Activated T-helper 1 cell treated with anti-CD3 and anti-CD28 coated beads, Interleukin-12 subunit alpha, Interleukin-12 subunit beta, Interleukin-2, Interleukin-4 antibody, amounts not matched to agents 30 ng/mL and 10 ng/mL and 1 ng/mL, durations not matched to agents 14 hours and 24 hours and 36 hours (primary cell): ENCODE measurements at regions of chr15 and their contacts with region 1.

Region 1: GRCh38 chr15:55829826-55830225 is 86.9 kb upstream of the PRTG start:
- DNase-seq: no peak
- H3K4me3 Mint-ChIP-seq: peak overlapping the region; percentile 28
- H3K27ac Mint-ChIP-seq: peak overlapping the region; percentile 4
- H3K4me1 Mint-ChIP-seq: peaks cover 30% of the 10 kb centered on the region
- H3K27me3 Mint-ChIP-seq: no peaks in the 10 kb centered on the region

Region 2: GRCh38 chr15:55649054-55649423 is 180.8 kb before region 1 on chr15:
- intact Hi-C with region 1: no loop called
- DNase-seq: no peak
- H3K4me3 Mint-ChIP-seq: no peak overlapping the region
- H3K27ac Mint-ChIP-seq: no peak overlapping the region
- H3K4me1 Mint-ChIP-seq: no peaks in the 10 kb centered on the region
- H3K27me3 Mint-ChIP-seq: peaks cover 7% of the 10 kb centered on the region

Region 3: GRCh38 chr15:55681631-55682030 is 148.2 kb before region 1 on chr15:
- intact Hi-C with region 1: loop called (anchors 1 kb)
- DNase-seq: no peak
- H3K4me3 Mint-ChIP-seq: no peak overlapping the region
- H3K27ac Mint-ChIP-seq: no peak overlapping the region
- H3K4me1 Mint-ChIP-seq: peaks cover 5% of the 10 kb centered on the region
- H3K27me3 Mint-ChIP-seq: peaks cover 6% of the 10 kb centered on the region

Region 4: DNA sequence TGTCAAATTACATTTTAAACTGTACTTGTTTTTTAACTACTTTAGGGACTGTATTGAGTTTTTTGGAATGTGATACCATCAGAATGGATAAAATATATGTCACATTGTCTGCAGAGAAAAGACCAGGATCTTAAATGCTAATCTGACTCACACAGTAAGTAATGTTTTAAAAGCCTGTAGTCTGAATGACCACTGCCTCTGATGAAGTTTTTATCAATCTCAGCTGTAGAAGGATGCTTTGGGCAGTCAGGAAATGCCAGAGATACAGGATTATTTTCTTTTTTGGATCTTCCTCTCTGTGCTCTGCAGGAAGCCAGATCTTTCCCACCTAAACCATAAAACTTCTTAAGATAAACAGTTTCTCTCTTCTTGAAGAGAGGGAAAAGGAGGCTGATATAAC is 13.8 kb before region 1 on chr15:
- intact Hi-C with region 1: no loop called
- DNase-seq: no peak
- H3K4me3 Mint-ChIP-seq: no peak overlapping the region
- H3K27ac Mint-ChIP-seq: no peak overlapping the region
- H3K4me1 Mint-ChIP-seq: no peaks in the 10 kb centered on the region
- H3K27me3 Mint-ChIP-seq: peaks cover 2% of the 10 kb centered on the region